Activated CD4-positive, alpha-beta memory T cell treated with anti-CD3 and anti-CD28 coated beads for 36 hours (primary cell): ENCODE measurements at regions of chr7 and their contacts with region 1.

Region 1: DNA sequence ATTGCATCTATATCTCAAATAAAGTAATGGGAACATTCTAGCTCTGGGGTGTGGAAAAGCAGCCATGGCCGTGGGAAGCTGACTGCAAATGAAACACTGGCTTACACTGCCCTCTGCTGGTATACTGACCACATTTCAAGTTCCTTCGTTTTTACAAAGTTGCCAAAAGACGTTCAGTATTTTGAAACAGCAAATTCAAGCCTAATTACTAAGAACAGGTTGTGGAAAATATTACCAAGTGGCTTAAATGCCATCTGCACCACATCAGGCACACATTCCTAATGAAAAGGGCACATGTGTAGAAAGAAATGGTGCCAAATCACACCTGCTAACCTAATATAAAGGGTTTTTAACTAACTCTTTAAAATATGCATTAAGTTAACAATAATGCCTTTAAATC is 83.9 kb downstream of the JAZF1 start:
- DNase-seq: peak; percentile 42
- H3K4me3 Mint-ChIP-seq: no peak overlapping the region
- H3K27ac Mint-ChIP-seq: no peak overlapping the region
- H3K4me1 Mint-ChIP-seq: peaks cover 5% of the 10 kb centered on the region
- H3K27me3 Mint-ChIP-seq: no peaks in the 10 kb centered on the region

Region 2: DNA sequence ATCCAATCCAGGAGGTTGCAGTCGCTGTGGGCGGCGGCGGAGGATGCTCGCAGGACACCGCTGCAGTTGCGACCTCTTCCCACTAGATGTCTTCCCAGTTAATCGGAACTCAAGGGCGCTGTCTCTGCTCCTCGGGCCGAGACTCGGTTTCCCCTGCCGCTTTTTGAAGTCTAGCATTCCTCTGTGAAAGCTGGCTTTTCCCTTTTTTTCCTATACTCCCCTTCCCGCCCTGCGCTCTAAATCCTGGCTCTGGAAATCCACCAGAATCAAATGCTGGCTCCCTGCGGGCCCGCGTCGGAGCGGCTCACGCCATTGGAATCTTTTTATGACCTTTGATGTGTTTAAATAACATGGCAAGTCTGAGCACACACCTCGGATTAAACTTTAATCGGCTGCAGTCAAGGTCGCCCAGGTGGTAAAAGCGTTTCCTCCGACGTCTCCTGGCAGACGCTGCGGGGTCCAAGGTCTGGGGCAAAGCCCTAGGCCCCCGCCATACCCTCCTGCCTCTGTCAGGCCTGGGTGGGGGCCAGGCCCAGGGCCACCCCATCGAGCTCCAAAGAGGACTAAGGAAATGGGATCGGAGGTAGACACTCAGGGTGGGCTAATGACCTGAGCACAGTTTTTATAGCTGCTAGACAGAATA is 886.2 kb before region 1 on chr7:
- CTCF ChIA-PET with region 1: interaction called, 11 read pairs
- POLR2A ChIA-PET with region 1: no interaction called
- intact Hi-C with region 1: no loop called
- DNase-seq: peak; percentile 63
- H3K4me3 Mint-ChIP-seq: no peak overlapping the region
- H3K27ac Mint-ChIP-seq: no peak overlapping the region
- H3K4me1 Mint-ChIP-seq: peaks cover 14% of the 10 kb centered on the region
- H3K27me3 Mint-ChIP-seq: peaks cover 86% of the 10 kb centered on the region

Region 3: DNA sequence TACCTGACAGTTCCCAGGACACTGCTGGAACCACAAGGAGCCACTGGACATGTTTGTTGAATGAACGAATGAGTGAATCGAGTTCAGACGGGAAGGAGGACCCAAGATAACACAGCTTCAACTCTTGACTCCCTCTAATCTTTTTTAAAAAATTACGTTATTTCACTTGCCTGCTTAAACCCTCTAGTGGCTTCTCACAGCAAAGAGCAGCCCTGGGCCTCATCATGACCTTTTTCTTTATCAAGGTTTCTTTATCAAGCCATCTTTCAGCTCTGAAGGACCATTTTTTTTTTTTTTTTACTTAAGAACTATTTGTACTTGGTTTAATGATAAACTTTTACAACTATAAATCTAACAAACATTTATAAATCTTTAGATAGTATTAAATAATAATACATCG is 246.2 kb before region 1 on chr7:
- CTCF ChIA-PET with region 1: no interaction called
- POLR2A ChIA-PET with region 1: no interaction called
- intact Hi-C with region 1: no loop called
- DNase-seq: no peak
- H3K4me3 Mint-ChIP-seq: no peak overlapping the region
- H3K27ac Mint-ChIP-seq: no peak overlapping the region
- H3K4me1 Mint-ChIP-seq: no peaks in the 10 kb centered on the region
- H3K27me3 Mint-ChIP-seq: no peaks in the 10 kb centered on the region

Region 4: GRCh38 chr7:28020302-28020940 is 76.3 kb before region 1 on chr7:
- CTCF ChIA-PET with region 1: interaction called, 20 read pairs
- POLR2A ChIA-PET with region 1: no interaction called
- intact Hi-C with region 1: no loop called
- DNase-seq: peak; percentile 39
- H3K4me3 Mint-ChIP-seq: no peak overlapping the region
- H3K27ac Mint-ChIP-seq: no peak overlapping the region
- H3K4me1 Mint-ChIP-seq: peaks cover 2% of the 10 kb centered on the region
- H3K27me3 Mint-ChIP-seq: no peaks in the 10 kb centered on the region

Region 5: GRCh38 chr7:28062197-28062991 is 34.3 kb before region 1 on chr7:
- CTCF ChIA-PET with region 1: interaction called, 76 read pairs
- POLR2A ChIA-PET with region 1: no interaction called
- intact Hi-C with region 1: loop called (anchors 1 kb)
- DNase-seq: peak; percentile 74
- H3K4me3 Mint-ChIP-seq: no peak overlapping the region
- H3K27ac Mint-ChIP-seq: no peak overlapping the region
- H3K4me1 Mint-ChIP-seq: peaks cover 3% of the 10 kb centered on the region
- H3K27me3 Mint-ChIP-seq: no peaks in the 10 kb centered on the region

Region 6: GRCh38 chr7:28078036-28078901 is 18.4 kb before region 1 on chr7:
- CTCF ChIA-PET with region 1: interaction called, 21 read pairs
- POLR2A ChIA-PET with region 1: no interaction called
- intact Hi-C with region 1: no loop called
- DNase-seq: peak; percentile 60
- H3K4me3 Mint-ChIP-seq: no peak overlapping the region
- H3K27ac Mint-ChIP-seq: no peak overlapping the region
- H3K4me1 Mint-ChIP-seq: peaks cover 5% of the 10 kb centered on the region
- H3K27me3 Mint-ChIP-seq: no peaks in the 10 kb centered on the region